CD8-positive, alpha-beta T cell (primary cell): ENCODE measurements at regions of chr15 and their contacts with region 1.

Region 1: GRCh38 chr15:74768771-74769342 is 13.0 kb upstream of the CSK start:
- DNase-seq: peak in 6 of 9 experiments; percentile 58 to 77 (median 70)
- ATAC-seq: peak; percentile 65
- H3K4me3 ChIP-seq: no peak overlapping the region
- H3K4me3 Mint-ChIP-seq: no peak overlapping the region
- H3K27ac ChIP-seq: no peak overlapping the region
- H3K27ac Mint-ChIP-seq: no peak overlapping the region
- H3K4me1 ChIP-seq: peaks cover 17% of the 10 kb centered on the region
- H3K4me1 Mint-ChIP-seq: peaks cover 21% of the 10 kb centered on the region
- H3K27me3 ChIP-seq: no peaks in the 10 kb centered on the region
- H3K27me3 Mint-ChIP-seq: peaks cover 4% of the 10 kb centered on the region
- CTCF ChIP-seq: peak; percentile 71

Region 2: GRCh38 chr15:74373731-74374647 is 394.9 kb before region 1 on chr15:
- CTCF ChIA-PET with region 1: interaction called, 7 read pairs
- POLR2A ChIA-PET with region 1: interaction called, 6 read pairs
- intact Hi-C with region 1: loop called in 1 of 2 experiments (anchors 1 kb)
- DNase-seq: peak; percentile 92 to 97 (median 95)
- ATAC-seq: peak; percentile 96
- H3K4me3 ChIP-seq: peak overlapping the region; percentile 89 to 96
- H3K4me3 Mint-ChIP-seq: peak overlapping the region; percentile 82
- H3K27ac ChIP-seq: peak overlapping the region; percentile 45 to 62
- H3K27ac Mint-ChIP-seq: no peak overlapping the region
- H3K4me1 ChIP-seq: peaks cover 15% of the 10 kb centered on the region
- H3K4me1 Mint-ChIP-seq: peaks cover 16% of the 10 kb centered on the region
- H3K27me3 ChIP-seq: no peaks in the 10 kb centered on the region
- H3K27me3 Mint-ChIP-seq: peaks cover 8% of the 10 kb centered on the region
- CTCF ChIP-seq: peak; percentile 86

Region 3: GRCh38 chr15:74608786-74609185 is 160.1 kb before region 1 on chr15:
- CTCF ChIA-PET with region 1: no interaction called
- POLR2A ChIA-PET with region 1: no interaction called
- intact Hi-C with region 1: no loop called
- DNase-seq: no peak
- ATAC-seq: no peak
- H3K4me3 ChIP-seq: no peak overlapping the region
- H3K4me3 Mint-ChIP-seq: no peak overlapping the region
- H3K27ac ChIP-seq: no peak overlapping the region
- H3K27ac Mint-ChIP-seq: no peak overlapping the region
- H3K4me1 ChIP-seq: no peaks in the 10 kb centered on the region
- H3K4me1 Mint-ChIP-seq: no peaks in the 10 kb centered on the region
- H3K27me3 ChIP-seq: no peaks in the 10 kb centered on the region
- H3K27me3 Mint-ChIP-seq: no peaks in the 10 kb centered on the region
- CTCF ChIP-seq: no peak

Region 4: GRCh38 chr15:74758736-74759135 is 10.1 kb before region 1 on chr15:
- CTCF ChIA-PET with region 1: interaction called, 20 read pairs
- POLR2A ChIA-PET with region 1: no interaction called
- intact Hi-C with region 1: no loop called
- DNase-seq: no peak
- ATAC-seq: no peak
- H3K4me3 ChIP-seq: no peak overlapping the region
- H3K4me3 Mint-ChIP-seq: no peak overlapping the region
- H3K27ac ChIP-seq: no peak overlapping the region
- H3K27ac Mint-ChIP-seq: no peak overlapping the region
- H3K4me1 ChIP-seq: peaks cover 10% of the 10 kb centered on the region
- H3K4me1 Mint-ChIP-seq: no peaks in the 10 kb centered on the region
- H3K27me3 ChIP-seq: no peaks in the 10 kb centered on the region
- H3K27me3 Mint-ChIP-seq: peaks cover 2% of the 10 kb centered on the region
- CTCF ChIP-seq: no peak

Region 5: GRCh38 chr15:74793135-74794028 is 24.5 kb after region 1 on chr15:
- CTCF ChIA-PET with region 1: interaction called, 1,956 read pairs
- POLR2A ChIA-PET with region 1: interaction called, 512 read pairs
- intact Hi-C with region 1: loop called (anchors 1 kb)
- DNase-seq: peak; percentile 60 to 88 (median 84)
- ATAC-seq: peak; percentile 51
- H3K4me3 ChIP-seq: peak overlapping the region; percentile 20 to 24
- H3K4me3 Mint-ChIP-seq: peak overlapping the region; percentile 69
- H3K27ac ChIP-seq: peak overlapping the region in 1 of 2 experiments; percentile 72
- H3K27ac Mint-ChIP-seq: peak overlapping the region; percentile 91
- H3K4me1 ChIP-seq: peaks cover 98% of the 10 kb centered on the region
- H3K4me1 Mint-ChIP-seq: peaks cover 89% of the 10 kb centered on the region
- H3K27me3 ChIP-seq: no peaks in the 10 kb centered on the region
- H3K27me3 Mint-ChIP-seq: no peaks in the 10 kb centered on the region
- CTCF ChIP-seq: peak; percentile 66

Region 6: GRCh38 chr15:74835307-74835823 is 66.5 kb after region 1 on chr15:
- CTCF ChIA-PET with region 1: interaction called, 16 read pairs
- POLR2A ChIA-PET with region 1: interaction called, 3 read pairs
- intact Hi-C with region 1: no loop called
- DNase-seq: peak in 8 of 9 experiments; percentile 13 to 62 (median 44)
- ATAC-seq: peak; percentile 65
- H3K4me3 ChIP-seq: no peak overlapping the region
- H3K4me3 Mint-ChIP-seq: no peak overlapping the region
- H3K27ac ChIP-seq: no peak overlapping the region
- H3K27ac Mint-ChIP-seq: no peak overlapping the region
- H3K4me1 ChIP-seq: no peaks in the 10 kb centered on the region
- H3K4me1 Mint-ChIP-seq: no peaks in the 10 kb centered on the region
- H3K27me3 ChIP-seq: no peaks in the 10 kb centered on the region
- H3K27me3 Mint-ChIP-seq: peaks cover 2% of the 10 kb centered on the region
- CTCF ChIP-seq: peak; percentile 62

Region 7: GRCh38 chr15:74873036-74873755 is 104.3 kb after region 1 on chr15 and contains the start of gene SCAMP2:
- CTCF ChIA-PET with region 1: interaction called, 16 read pairs
- POLR2A ChIA-PET with region 1: no interaction called
- intact Hi-C with region 1: no loop called
- DNase-seq: peak; percentile 82 to 96 (median 90)
- ATAC-seq: peak; percentile 93
- H3K4me3 ChIP-seq: peak within 1 kb of the TSS; percentile 84 to 96
- H3K4me3 Mint-ChIP-seq: peak within 1 kb of the TSS; percentile 98
- H3K27ac ChIP-seq: peak within 1 kb of the TSS; percentile 87 to 95
- H3K27ac Mint-ChIP-seq: peak within 1 kb of the TSS; percentile 95
- H3K4me1 ChIP-seq: peaks cover 43% of the 10 kb centered on the region
- H3K4me1 Mint-ChIP-seq: peaks cover 45% of the 10 kb centered on the region
- H3K27me3 ChIP-seq: no peaks in the 10 kb centered on the region
- H3K27me3 Mint-ChIP-seq: no peaks in the 10 kb centered on the region
- CTCF ChIP-seq: no peak
- total RNA-seq, gene SCAMP2: 48.7 to 57.2 TPM